ENCODE measurements at regions of chr5 and their contacts with region 1.

Region 1: DNA sequence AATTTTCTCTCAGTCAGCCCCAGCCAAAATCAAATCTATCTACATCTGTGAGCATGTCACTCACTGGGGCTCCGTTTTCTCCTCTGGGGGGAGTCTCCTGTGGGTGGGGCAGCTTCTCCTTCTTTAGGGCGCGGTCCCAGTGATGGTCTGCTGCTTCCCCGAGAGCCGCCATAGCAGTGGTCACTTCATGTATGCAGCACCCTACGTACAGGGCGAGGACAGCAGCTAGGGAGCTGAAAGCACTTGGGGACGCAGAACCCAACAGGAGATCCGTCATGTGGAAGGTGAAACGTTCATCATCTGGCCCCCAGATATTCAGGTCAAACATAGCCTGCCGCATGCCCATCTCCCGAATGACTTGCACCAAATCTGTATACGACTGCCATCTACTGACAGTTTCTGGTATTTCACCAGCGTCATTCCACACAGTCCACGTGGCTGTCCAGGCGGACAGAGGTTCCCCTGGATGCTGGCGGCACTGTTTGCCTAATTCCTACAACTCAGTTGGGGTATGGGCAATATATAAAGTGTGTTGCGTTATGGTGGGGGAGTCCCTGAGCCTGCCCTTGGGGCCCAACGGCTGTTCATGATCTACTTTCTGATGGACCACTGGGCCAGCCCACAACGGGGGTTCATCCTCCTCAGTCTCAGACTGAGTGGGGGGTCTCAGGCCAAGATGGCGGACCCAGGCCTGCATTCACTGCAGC is 795.0 kb downstream of the EFNA5 start:
- DNase-seq: peak; percentile 62
- ATAC-seq: peak; percentile 97
- H3K4me3 ChIP-seq: no peak overlapping the region
- H3K27ac ChIP-seq: no peak overlapping the region
- H3K4me1 ChIP-seq: no peaks in the 10 kb centered on the region
- H3K27me3 ChIP-seq: no peaks in the 10 kb centered on the region; a peak in 1 of 5 replicates
- CTCF ChIP-seq: peak; percentile 87
- EP300 ChIP-seq: no peak
- POLR2A ChIP-seq: no peak
- RAD21 ChIP-seq: 0 out of 2 replicates have a peak, but pooled peaks have one; percentile 12

Region 2: DNA sequence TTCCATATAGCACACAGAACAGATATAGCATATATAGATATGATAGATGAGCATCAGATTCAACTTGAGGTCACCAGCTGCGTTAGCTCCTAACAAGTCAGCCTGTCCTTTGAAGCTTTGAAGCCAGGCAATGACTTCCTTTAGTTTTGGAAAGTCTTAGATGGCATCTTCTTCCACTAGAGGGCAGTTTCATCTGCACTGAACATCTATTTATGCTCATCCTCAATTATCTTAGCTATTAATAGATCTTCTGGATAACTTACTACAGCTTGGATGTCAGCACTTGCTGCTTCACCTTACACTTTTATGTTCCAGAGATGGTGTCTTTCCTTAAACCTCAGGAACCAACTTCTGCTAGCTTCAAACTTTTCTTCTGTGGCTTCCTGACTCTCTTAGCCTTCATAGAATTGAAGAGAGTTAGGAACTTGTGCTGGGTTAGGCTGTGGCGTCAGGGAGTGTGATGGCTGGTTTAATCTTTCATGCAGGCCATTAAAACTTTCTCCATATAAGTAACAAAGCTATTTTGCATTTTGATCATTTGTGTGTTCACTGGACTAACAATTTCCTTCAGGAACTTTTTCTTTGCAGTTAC is 606.4 kb before region 1 on chr5:
- CTCF ChIA-PET with region 1: interaction called, 3 read pairs
- POLR2A ChIA-PET with region 1: no interaction called
- in situ Hi-C with region 1: no loop called
- intact Hi-C with region 1: loop called (anchors 1 kb)
- DNase-seq: peak; percentile 1
- ATAC-seq: peak; percentile 61; the same call in 2 of the 3 replicates
- H3K4me3 ChIP-seq: no peak overlapping the region
- H3K27ac ChIP-seq: no peak overlapping the region
- H3K4me1 ChIP-seq: no peaks in the 10 kb centered on the region
- H3K27me3 ChIP-seq: no peaks in the 10 kb centered on the region
- CTCF ChIP-seq: peak; percentile 32
- EP300 ChIP-seq: no peak
- POLR2A ChIP-seq: no peak
- RAD21 ChIP-seq: no peak

Region 3: DNA sequence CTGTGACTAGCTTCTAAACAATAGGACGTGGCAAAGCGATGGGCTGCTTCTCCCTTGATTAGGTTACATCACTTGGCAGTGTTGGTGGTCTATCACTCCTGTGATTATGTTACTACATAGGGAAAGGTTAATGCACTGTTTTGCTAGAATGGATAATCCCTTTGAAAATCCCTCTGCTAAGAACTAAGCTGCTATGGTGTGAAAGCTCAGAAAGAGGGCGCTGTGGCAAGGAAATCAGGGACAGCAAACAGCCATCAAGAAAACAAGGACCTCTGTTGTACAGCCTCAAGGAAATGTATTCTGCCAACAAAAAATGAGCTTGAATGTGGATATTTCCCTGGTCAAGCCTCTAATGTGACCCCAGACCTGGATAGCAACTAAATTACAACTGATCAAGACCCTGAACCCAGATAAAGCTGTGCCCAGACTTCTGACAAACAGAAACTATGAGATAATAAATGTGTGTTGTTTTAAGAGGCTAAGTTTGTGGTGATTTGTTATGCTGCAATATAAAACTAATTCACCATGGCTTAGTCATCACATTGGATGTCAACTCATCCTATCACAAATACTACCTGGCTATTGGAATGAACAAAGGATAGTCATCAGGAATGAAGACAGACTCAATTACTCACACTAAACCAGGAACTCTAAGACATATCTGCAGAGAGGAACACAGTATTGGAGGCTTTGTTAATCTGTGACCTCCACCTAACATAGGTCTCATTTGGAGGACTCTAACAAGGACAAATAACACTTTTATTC is 420.9 kb before region 1 on chr5:
- CTCF ChIA-PET with region 1: no interaction called
- POLR2A ChIA-PET with region 1: no interaction called
- in situ Hi-C with region 1: no loop called
- intact Hi-C with region 1: loop called (anchors 1 kb)
- DNase-seq: peak; percentile 5
- ATAC-seq: 0 out of 3 replicates have a peak, but pooled peaks have one; percentile 34
- H3K4me3 ChIP-seq: no peak overlapping the region
- H3K27ac ChIP-seq: no peak overlapping the region
- H3K4me1 ChIP-seq: no peaks in the 10 kb centered on the region
- H3K27me3 ChIP-seq: no peaks in the 10 kb centered on the region
- CTCF ChIP-seq: no peak
- EP300 ChIP-seq: no peak
- POLR2A ChIP-seq: no peak
- RAD21 ChIP-seq: no peak

Region 4: DNA sequence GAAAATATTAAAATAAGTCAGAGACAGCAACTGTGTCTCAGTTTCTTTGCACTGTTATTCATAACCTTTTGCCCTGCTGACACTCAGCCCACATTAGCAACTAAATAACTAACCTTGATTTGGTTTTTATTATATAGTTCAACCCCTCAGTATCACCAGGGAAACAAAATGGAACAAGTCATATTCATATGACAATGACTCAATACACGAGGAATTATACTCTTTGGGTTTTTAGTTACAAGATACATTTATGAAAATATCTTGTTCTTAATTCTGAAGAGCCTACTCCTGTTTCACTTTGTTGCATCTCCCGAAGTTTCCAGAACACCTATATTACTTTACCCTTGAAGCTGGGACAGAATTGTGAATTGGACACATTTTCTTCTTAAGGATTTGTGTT is 50.4 kb before region 1 on chr5:
- CTCF ChIA-PET with region 1: no interaction called
- POLR2A ChIA-PET with region 1: no interaction called
- in situ Hi-C with region 1: no loop called
- intact Hi-C with region 1: no loop called
- DNase-seq: no peak
- ATAC-seq: no peak
- H3K4me3 ChIP-seq: no peak overlapping the region
- H3K27ac ChIP-seq: no peak overlapping the region
- H3K4me1 ChIP-seq: no peaks in the 10 kb centered on the region
- H3K27me3 ChIP-seq: no peaks in the 10 kb centered on the region
- CTCF ChIP-seq: no peak
- EP300 ChIP-seq: no peak
- POLR2A ChIP-seq: no peak
- RAD21 ChIP-seq: no peak

Region 5: DNA sequence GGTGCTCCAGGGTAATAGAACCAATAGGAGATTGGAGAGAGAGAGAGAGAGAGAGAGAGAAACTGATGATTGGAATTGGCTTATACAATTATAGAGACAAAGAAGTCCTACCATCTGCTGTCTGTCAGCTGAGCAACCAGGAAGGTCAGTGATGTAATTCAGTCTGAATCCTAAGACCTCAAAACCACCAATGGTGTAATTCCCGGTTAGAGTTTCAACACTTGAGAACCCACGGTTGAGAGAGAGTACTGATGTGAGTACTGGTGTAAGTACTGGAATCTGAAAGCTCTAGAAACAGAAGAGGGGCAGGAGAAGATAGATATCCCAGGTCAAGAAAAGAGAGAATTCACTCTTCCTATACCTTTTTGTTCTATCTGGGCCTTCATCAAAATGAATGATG is 19.2 kb after region 1 on chr5:
- CTCF ChIA-PET with region 1: no interaction called
- POLR2A ChIA-PET with region 1: no interaction called
- in situ Hi-C with region 1: no loop called
- intact Hi-C with region 1: no loop called
- DNase-seq: no peak
- ATAC-seq: no peak
- H3K4me3 ChIP-seq: no peak overlapping the region
- H3K27ac ChIP-seq: no peak overlapping the region
- H3K4me1 ChIP-seq: no peaks in the 10 kb centered on the region
- H3K27me3 ChIP-seq: no peaks in the 10 kb centered on the region
- CTCF ChIP-seq: no peak
- EP300 ChIP-seq: no peak
- POLR2A ChIP-seq: no peak
- RAD21 ChIP-seq: no peak

Region 6: DNA sequence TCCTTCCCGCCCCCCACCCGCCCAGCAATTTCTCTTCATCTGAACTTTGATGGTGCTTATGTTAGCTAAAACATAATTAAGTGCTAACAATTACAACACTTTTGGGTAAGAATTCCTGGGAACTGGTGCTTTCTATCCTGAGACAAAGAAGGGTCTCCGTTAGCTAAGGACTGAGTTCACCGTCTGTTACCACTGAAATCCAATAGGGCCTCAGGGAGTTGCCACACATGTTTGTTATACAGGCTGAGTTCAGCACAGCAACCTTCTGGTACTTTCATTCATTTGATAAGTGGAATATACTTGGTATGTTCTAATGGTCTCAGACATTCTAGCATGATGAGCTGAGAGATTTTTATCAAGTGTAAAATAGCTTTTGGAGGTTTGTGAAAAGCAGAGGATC is 357.0 kb after region 1 on chr5:
- CTCF ChIA-PET with region 1: no interaction called
- POLR2A ChIA-PET with region 1: no interaction called
- in situ Hi-C with region 1: no loop called
- intact Hi-C with region 1: no loop called
- DNase-seq: no peak
- ATAC-seq: no peak
- H3K4me3 ChIP-seq: no peak overlapping the region
- H3K27ac ChIP-seq: no peak overlapping the region
- H3K4me1 ChIP-seq: no peaks in the 10 kb centered on the region
- H3K27me3 ChIP-seq: no peaks in the 10 kb centered on the region
- CTCF ChIP-seq: no peak
- EP300 ChIP-seq: no peak
- POLR2A ChIP-seq: no peak
- RAD21 ChIP-seq: no peak

Measured in HepG2 (cell line).